Endothelial cell of umbilical vein (primary cell): ENCODE measurements at regions of chr1 and their contacts with region 1.

Region 1: GRCh38 chr1:234631721-234632125 is 21.7 kb upstream of the IRF2BP2 start:
- DNase-seq: peak; percentile 98
- H3K4me3 ChIP-seq: no peak overlapping the region
- H3K27ac ChIP-seq: peak overlapping the region; percentile 95
- H3K4me1 ChIP-seq: peaks cover 38% of the 10 kb centered on the region
- H3K27me3 ChIP-seq: no peaks in the 10 kb centered on the region
- CTCF ChIP-seq: no peak
- POLR2A ChIP-seq: no peak

Region 2: DNA sequence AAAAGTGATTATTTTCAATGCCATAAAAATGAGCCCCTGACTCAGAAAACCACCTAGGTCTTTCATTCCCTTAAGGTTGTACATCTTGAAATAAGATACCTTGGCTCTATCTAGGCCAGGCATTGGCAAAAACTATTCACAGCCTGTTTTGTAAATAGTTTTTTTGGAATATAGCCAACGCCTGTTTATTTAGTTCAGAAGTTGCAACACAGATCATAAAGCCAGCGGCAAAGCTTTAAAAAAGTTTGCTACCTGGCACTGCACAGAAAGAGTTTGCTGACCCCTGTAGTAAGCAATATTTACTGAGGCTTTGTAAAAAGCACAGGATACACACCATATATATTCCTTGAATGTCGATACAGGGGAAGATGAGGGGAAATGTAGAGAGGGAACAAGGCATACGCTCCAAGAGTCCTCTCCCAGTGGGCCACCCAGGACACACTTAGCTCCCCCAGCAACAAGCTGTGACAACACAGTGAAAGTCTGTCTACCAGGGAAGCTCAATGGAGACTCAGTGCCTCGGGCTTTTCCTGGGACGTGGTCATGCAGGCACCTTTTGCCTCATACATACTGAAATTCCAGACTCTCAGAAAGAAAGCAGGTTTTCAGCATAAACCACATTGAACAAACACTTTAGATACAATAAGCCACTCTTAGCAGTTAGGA is 173.2 kb before region 1 on chr1:
- CTCF ChIA-PET with region 1: no interaction called
- POLR2A ChIA-PET with region 1: no interaction called
- dilution Hi-C with region 1: no loop called
- intact Hi-C with region 1: no loop called
- DNase-seq: no peak
- H3K4me3 ChIP-seq: no peak overlapping the region
- H3K27ac ChIP-seq: no peak overlapping the region
- H3K4me1 ChIP-seq: no peaks in the 10 kb centered on the region
- H3K27me3 ChIP-seq: no peaks in the 10 kb centered on the region
- CTCF ChIP-seq: no peak
- POLR2A ChIP-seq: no peak

Region 3: DNA sequence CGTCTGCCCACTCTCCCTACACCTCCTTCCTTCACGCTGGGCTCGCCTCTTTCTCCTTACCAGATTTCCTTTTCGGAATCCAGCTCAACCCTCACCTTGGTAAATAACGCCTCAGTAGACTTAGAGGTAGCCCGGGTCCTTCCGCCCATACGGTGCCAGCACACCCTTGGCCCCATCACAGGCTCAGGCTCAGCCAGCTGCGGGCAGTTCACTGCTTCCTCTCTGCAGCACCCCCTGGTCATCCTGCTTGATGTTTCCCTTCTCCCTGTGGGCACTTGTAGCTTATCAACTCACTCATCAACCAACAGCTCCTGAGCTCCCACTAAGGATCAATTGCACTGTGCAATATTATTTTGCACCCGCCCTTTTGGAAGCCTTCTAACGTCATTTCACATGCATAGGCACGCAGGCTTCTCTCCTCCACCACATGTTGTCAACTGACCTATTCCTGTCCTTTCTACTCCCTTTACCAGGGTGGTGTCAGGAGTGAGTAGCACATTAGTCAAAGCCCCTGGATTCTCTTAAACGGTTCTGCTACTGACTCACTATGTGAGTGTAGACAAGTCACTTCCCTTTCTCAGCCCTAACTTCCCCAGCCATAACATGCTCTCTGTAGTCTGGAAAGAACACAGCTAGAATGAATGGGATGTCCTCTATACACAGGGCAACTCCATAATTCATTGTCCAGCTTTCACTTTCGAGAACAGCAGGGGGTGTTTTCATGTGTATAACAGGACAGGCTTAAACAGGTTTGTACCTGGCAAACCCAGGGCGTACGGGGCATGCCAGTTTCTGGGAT is 25.3 kb after region 1 on chr1:
- CTCF ChIA-PET with region 1: interaction called, 12 read pairs
- POLR2A ChIA-PET with region 1: interaction called, 4 read pairs
- dilution Hi-C with region 1: no loop called
- intact Hi-C with region 1: loop called (anchors 1 kb)
- DNase-seq: peak; percentile 92
- H3K4me3 ChIP-seq: no peak overlapping the region
- H3K27ac ChIP-seq: peak overlapping the region; percentile 82
- H3K4me1 ChIP-seq: peaks cover 33% of the 10 kb centered on the region
- H3K27me3 ChIP-seq: no peaks in the 10 kb centered on the region
- CTCF ChIP-seq: no peak
- POLR2A ChIP-seq: no peak

Region 4: GRCh38 chr1:234893725-234894630 is 262.3 kb after region 1 on chr1:
- CTCF ChIA-PET with region 1: interaction called, 3 read pairs
- POLR2A ChIA-PET with region 1: no interaction called
- dilution Hi-C with region 1: no loop called
- intact Hi-C with region 1: loop called (anchors 1 kb)
- DNase-seq: peak; percentile 98
- H3K4me3 ChIP-seq: no peak overlapping the region
- H3K27ac ChIP-seq: peak overlapping the region; percentile 93
- H3K4me1 ChIP-seq: peaks cover 20% of the 10 kb centered on the region
- H3K27me3 ChIP-seq: no peaks in the 10 kb centered on the region
- CTCF ChIP-seq: no peak
- POLR2A ChIP-seq: no peak